Activated CD4-positive, alpha-beta T cell treated with anti-CD3 and anti-CD28 coated beads, Interleukin-2, amount 10 ng/mL, durations not matched to agents 24 days and 14 days (primary cell): ENCODE measurements at regions of chr12 and their contacts with region 1.

Region 1: GRCh38 chr12:30754709-30755394 is at the start of gene CAPRIN2:
- DNase-seq: peak; percentile 98
- H3K4me3 Mint-ChIP-seq: peak within 1 kb of the TSS; percentile 91
- H3K27ac Mint-ChIP-seq: peak within 1 kb of the TSS; percentile 75
- H3K4me1 Mint-ChIP-seq: peaks cover 22% of the 10 kb centered on the region
- H3K27me3 Mint-ChIP-seq: peaks cover 8% of the 10 kb centered on the region
- total RNA-seq, gene CAPRIN2: 8.6 and 12.2 TPM in 2 replicates

Region 2: GRCh38 chr12:30695199-30696103 is 59.4 kb before region 1 on chr12 and contains the start of gene IPO8:
- intact Hi-C with region 1: loop called (anchors 1 kb)
- DNase-seq: peak; percentile 95
- H3K4me3 Mint-ChIP-seq: peak within 1 kb of the TSS; percentile 93
- H3K27ac Mint-ChIP-seq: peak within 1 kb of the TSS; percentile 91
- H3K4me1 Mint-ChIP-seq: peaks cover 33% of the 10 kb centered on the region
- H3K27me3 Mint-ChIP-seq: peaks cover 7% of the 10 kb centered on the region
- total RNA-seq, gene IPO8: 41.3 and 45.9 TPM in 2 replicates

Region 3: DNA sequence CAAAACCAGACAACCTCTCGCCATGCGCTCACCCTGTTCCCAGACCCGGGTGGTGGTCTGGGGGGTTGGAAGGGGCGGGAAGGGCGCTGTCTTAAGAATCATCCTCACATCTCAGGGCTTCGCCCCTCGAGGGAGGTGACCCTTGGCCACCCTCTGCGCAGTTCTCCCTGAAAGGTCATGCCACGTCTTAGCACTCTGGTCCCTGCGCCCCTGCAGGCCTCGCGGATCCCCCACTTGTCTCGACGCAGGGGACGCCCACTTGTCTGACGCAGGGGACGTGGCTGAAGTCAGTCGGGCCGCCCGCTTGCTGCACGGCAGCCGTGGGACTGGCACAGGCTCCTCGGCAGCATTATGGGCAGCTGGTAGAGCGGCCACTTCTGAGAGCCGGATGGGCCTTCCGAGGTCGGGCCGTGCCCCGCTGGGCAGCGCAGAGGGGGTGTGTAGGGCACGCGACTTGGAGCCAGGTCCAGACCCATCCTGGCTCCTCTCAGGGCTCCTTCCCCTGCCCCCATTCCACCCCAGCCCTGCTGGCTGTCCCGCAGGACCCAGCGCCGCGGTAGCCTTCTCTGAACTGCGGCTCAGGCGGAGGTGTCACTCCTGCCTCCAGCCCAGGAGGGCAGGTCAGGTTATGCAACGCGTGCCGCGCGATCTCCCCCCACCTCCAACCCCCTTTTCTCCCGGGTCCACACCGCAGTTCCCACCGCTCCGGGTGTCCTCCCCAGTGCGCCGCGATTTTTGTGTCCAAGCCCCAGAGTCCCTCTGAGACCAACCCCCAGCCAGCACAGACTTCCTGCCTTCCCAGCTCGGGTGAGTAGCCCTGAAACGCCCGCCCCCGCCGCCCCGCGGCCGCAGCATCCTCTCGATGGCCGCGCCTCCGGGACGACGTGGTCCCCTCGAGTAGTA is 40.8 kb after region 1 on chr12:
- intact Hi-C with region 1: loop called (anchors 1 kb)
- DNase-seq: peak; percentile 83
- H3K4me3 Mint-ChIP-seq: peak overlapping the region; percentile 79
- H3K27ac Mint-ChIP-seq: no peak overlapping the region
- H3K4me1 Mint-ChIP-seq: peaks cover 14% of the 10 kb centered on the region
- H3K27me3 Mint-ChIP-seq: peaks cover 47% of the 10 kb centered on the region

Region 4: GRCh38 chr12:31819427-31819826 is 1064.6 kb after region 1 on chr12:
- intact Hi-C with region 1: no loop called
- DNase-seq: no peak
- H3K4me3 Mint-ChIP-seq: no peak overlapping the region
- H3K27ac Mint-ChIP-seq: no peak overlapping the region
- H3K4me1 Mint-ChIP-seq: no peaks in the 10 kb centered on the region
- H3K27me3 Mint-ChIP-seq: no peaks in the 10 kb centered on the region